GM12878 (cell line): ENCODE measurements at regions of chr13 and their contacts with region 1.

Region 1: DNA sequence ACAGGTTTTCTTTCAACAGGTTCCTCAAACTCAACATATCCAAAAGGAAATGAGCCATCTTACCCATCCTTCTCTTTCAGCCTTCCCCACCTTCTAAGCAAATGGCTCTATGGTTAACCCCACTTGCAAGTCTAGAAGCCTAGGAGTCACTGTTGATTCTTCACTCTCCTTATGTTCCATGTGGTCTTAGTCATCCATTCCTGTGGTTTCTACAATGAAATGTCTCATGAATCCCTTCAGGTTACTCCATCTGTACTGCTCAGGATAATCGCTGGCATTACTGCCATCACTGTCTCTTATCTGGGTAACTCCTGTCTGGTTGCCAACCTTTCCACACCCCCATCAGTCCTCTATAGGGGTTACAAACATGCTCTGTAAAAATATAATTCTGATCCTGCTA is 381.3 kb downstream of the ENOX1 start:
- DNase-seq: no peak
- ATAC-seq: no peak
- H3K4me3 ChIP-seq: no peak overlapping the region
- H3K27ac ChIP-seq: no peak overlapping the region
- H3K4me1 ChIP-seq: no peaks in the 10 kb centered on the region
- H3K27me3 ChIP-seq: no peaks in the 10 kb centered on the region
- CTCF ChIP-seq: no peak
- EP300 ChIP-seq: no peak
- POLR2A ChIP-seq: no peak
- RAD21 ChIP-seq: no peak

Region 2: GRCh38 chr13:43356567-43356966 is 48.9 kb before region 1 on chr13:
- CTCF ChIA-PET with region 1: no interaction called
- POLR2A ChIA-PET with region 1: no interaction called
- RAD21 ChIA-PET with region 1: no interaction called
- SMC1A ChIA-PET with region 1: no interaction called
- in situ Hi-C with region 1: loop called (anchors 5 kb)
- intact Hi-C with region 1: no loop called
- DNase-seq: no peak
- ATAC-seq: no peak
- H3K4me3 ChIP-seq: no peak overlapping the region
- H3K27ac ChIP-seq: no peak overlapping the region
- H3K4me1 ChIP-seq: no peaks in the 10 kb centered on the region; the same call in 1 of the 2 replicates
- H3K27me3 ChIP-seq: no peaks in the 10 kb centered on the region
- CTCF ChIP-seq: no peak
- EP300 ChIP-seq: no peak
- POLR2A ChIP-seq: no peak
- RAD21 ChIP-seq: no peak

Region 3: GRCh38 chr13:43522788-43523187 is 117.3 kb after region 1 on chr13:
- CTCF ChIA-PET with region 1: no interaction called
- POLR2A ChIA-PET with region 1: no interaction called
- RAD21 ChIA-PET with region 1: no interaction called
- SMC1A ChIA-PET with region 1: no interaction called
- in situ Hi-C with region 1: no loop called
- intact Hi-C with region 1: no loop called
- DNase-seq: no peak
- ATAC-seq: no peak
- H3K4me3 ChIP-seq: no peak overlapping the region
- H3K27ac ChIP-seq: no peak overlapping the region
- H3K4me1 ChIP-seq: no peaks in the 10 kb centered on the region
- H3K27me3 ChIP-seq: no peaks in the 10 kb centered on the region; a peak in 1 of 4 replicates
- CTCF ChIP-seq: no peak
- EP300 ChIP-seq: no peak
- POLR2A ChIP-seq: no peak
- RAD21 ChIP-seq: no peak